ENCODE measurements at regions of chr1 and their contacts with region 1.

Region 1: DNA sequence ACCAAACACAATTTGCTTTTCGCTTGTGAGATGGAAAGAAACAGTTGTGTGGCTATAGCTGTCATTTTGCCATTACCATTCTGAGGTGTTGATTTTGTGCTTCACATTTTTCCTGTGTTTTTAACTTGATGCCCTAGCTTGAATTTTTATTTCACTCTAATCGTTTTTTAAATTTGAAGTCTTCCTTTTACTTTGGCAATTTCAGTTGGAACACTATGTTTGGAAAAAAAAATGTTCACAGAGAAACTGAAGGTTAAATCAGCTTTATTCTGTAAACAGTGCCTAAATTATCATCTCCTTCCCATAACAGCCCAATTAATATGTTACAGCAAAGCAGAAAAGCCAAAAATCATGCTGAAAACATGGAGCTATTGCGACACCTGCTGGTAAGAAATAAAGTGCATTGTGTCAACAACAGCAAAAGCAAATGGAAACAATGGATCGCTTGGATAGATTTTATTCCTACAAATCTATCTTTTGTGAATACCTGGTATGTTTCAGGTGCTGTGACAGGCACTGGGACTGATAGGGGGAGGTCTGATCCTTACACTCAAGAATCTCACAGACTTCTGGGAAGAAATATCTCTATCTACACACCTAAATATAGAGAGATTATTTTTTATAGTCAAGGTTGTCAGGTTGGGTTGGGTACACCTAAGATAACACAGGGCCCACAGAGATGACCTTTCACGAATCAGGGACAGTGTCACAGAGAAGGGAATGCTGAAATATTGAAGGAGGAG is 16.2 kb upstream of the ERICH3 start:
- DNase-seq: peak; percentile 46
- H3K4me3 ChIP-seq: no peak overlapping the region
- H3K27ac ChIP-seq: no peak overlapping the region
- H3K4me1 ChIP-seq: peaks cover 11% of the 10 kb centered on the region
- H3K27me3 ChIP-seq: no peaks in the 10 kb centered on the region
- CTCF ChIP-seq: peak; percentile 81 to 82

Region 2: GRCh38 chr1:73998348-73998959 is 691.3 kb before region 1 on chr1:
- CTCF ChIA-PET with region 1: interaction called, 3 read pairs
- dilution Hi-C with region 1: no loop called
- in situ Hi-C with region 1: no loop called
- intact Hi-C with region 1: loop called (anchors 10 kb)
- DNase-seq: peak; percentile 28
- H3K4me3 ChIP-seq: no peak overlapping the region
- H3K27ac ChIP-seq: no peak overlapping the region
- H3K4me1 ChIP-seq: no peaks in the 10 kb centered on the region
- H3K27me3 ChIP-seq: no peaks in the 10 kb centered on the region
- CTCF ChIP-seq: peak; percentile 44 to 50

Region 3: DNA sequence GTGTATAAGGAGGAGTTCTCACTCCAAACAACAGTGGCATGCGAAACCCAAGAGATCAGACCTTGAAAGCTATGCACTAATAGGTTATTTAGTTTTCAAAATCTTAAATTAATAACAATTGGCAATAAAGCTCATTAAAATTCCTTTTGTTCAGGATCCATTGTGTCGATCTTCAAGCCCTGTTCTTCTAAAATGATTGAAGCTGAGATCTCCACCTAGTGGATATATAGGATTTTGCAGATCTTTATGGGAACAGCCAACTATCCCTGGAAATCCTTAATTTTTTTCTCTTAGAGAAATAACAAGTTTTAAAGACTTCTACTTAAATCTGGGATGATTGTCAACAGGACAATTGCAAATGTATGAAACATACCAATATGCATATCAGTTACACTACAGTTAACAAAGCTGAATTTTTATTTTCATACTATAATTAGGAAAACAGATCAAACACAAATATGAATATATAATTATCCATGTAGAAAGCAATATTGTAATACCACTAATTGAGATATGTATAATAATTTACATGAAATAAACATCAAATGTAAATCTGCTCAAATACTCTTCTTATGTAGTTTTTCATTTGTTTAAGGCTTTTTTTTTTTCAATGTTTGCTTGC is 220.7 kb before region 1 on chr1:
- CTCF ChIA-PET with region 1: no interaction called
- dilution Hi-C with region 1: no loop called
- in situ Hi-C with region 1: no loop called
- intact Hi-C with region 1: loop called (anchors 2 kb)
- DNase-seq: peak; percentile 24
- H3K4me3 ChIP-seq: no peak overlapping the region
- H3K27ac ChIP-seq: no peak overlapping the region
- H3K4me1 ChIP-seq: no peaks in the 10 kb centered on the region
- H3K27me3 ChIP-seq: no peaks in the 10 kb centered on the region
- CTCF ChIP-seq: peak; percentile 52 to 65

Region 4: DNA sequence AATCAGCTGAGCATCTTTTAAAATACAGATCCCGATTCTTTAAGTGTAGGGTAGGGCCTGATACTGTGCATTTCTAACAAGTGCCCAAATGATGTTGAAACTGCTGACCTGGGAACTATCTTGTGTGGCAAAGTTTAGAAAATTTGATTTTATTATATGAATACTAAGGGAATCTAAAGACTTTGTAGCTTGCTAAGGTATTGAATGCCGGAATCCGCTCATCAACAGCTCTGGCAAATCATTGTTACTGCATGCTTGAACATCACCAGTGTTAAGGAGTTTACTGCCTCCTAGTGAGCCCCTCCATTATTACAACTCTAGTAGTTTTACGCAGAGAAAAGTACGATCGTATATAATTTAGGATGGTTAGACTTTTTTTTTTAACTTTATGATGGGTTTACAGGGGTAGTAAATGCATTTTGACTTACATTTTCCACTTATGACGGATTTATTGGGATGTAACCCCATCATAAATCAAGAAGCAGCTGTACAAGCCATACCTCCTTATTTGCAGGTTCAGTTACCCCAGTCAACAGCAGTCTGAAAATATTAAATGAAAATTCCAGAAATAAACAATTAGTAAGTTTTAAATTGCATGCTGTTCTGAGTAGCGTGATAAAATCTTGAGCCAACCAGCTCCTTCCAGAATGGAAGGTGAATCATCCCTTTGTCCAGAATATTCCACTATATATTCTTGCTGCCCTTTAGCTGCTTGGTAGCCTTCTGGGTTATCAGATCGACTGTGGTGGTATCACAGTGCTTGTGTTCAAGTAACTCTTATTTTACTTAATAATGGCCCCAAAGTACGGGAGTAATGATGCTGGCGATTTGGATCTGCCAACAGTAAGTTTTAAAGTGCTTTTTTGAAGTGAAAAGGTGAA is 44.1 kb after region 1 on chr1:
- CTCF ChIA-PET with region 1: no interaction called
- dilution Hi-C with region 1: no loop called
- in situ Hi-C with region 1: no loop called
- intact Hi-C with region 1: loop called (anchors 2 kb)
- DNase-seq: peak; percentile 57
- H3K4me3 ChIP-seq: peak overlapping the region; percentile 63 to 95 (median 87)
- H3K27ac ChIP-seq: peak overlapping the region; percentile 63
- H3K4me1 ChIP-seq: peaks cover 29% of the 10 kb centered on the region
- H3K27me3 ChIP-seq: no peaks in the 10 kb centered on the region
- CTCF ChIP-seq: peak; percentile 73 to 81

Region 5: GRCh38 chr1:74767490-74767889 is 77.7 kb after region 1 on chr1:
- CTCF ChIA-PET with region 1: no interaction called
- dilution Hi-C with region 1: no loop called
- in situ Hi-C with region 1: no loop called
- intact Hi-C with region 1: no loop called
- DNase-seq: peak; percentile 1
- H3K4me3 ChIP-seq: no peak overlapping the region
- H3K27ac ChIP-seq: no peak overlapping the region
- H3K4me1 ChIP-seq: no peaks in the 10 kb centered on the region
- H3K27me3 ChIP-seq: no peaks in the 10 kb centered on the region
- CTCF ChIP-seq: peak; percentile 24 to 40